ENCODE measurements at regions of chr12 and their contacts with region 1.

Region 1: GRCh38 chr12:122871851-122872780 is 23.8 kb downstream of the VPS37B start:
- DNase-seq: peak; percentile 99
- ATAC-seq: peak; percentile 74
- H3K4me3 Mint-ChIP-seq: 0 out of 2 replicates have a peak overlapping the region, but pooled peaks have one; percentile 26
- H3K27ac Mint-ChIP-seq: peak overlapping the region; percentile 64
- H3K4me1 Mint-ChIP-seq: peaks cover 36% of the 10 kb centered on the region
- H3K27me3 Mint-ChIP-seq: peaks cover 99% of the 10 kb centered on the region
- CTCF ChIP-seq: no peak

Region 2: GRCh38 chr12:122297494-122297893 is 574.6 kb before region 1 on chr12:
- CTCF ChIA-PET with region 1: no interaction called
- POLR2A ChIA-PET with region 1: no interaction called
- DNase-seq: no peak
- ATAC-seq: no peak
- H3K4me3 Mint-ChIP-seq: no peak overlapping the region
- H3K27ac Mint-ChIP-seq: no peak overlapping the region
- H3K4me1 Mint-ChIP-seq: no peaks in the 10 kb centered on the region
- H3K27me3 Mint-ChIP-seq: no peaks in the 10 kb centered on the region
- CTCF ChIP-seq: no peak

Region 3: GRCh38 chr12:122891661-122892525 is 19.8 kb after region 1 on chr12:
- CTCF ChIA-PET with region 1: interaction called, 12 read pairs
- POLR2A ChIA-PET with region 1: interaction called, 3 read pairs
- DNase-seq: no peak
- ATAC-seq: peak; percentile 57
- H3K4me3 Mint-ChIP-seq: peak overlapping the region; percentile 34
- H3K27ac Mint-ChIP-seq: peak overlapping the region; percentile 82
- H3K4me1 Mint-ChIP-seq: peaks cover 72% of the 10 kb centered on the region
- H3K27me3 Mint-ChIP-seq: peaks cover 74% of the 10 kb centered on the region
- CTCF ChIP-seq: no peak

Region 4: DNA sequence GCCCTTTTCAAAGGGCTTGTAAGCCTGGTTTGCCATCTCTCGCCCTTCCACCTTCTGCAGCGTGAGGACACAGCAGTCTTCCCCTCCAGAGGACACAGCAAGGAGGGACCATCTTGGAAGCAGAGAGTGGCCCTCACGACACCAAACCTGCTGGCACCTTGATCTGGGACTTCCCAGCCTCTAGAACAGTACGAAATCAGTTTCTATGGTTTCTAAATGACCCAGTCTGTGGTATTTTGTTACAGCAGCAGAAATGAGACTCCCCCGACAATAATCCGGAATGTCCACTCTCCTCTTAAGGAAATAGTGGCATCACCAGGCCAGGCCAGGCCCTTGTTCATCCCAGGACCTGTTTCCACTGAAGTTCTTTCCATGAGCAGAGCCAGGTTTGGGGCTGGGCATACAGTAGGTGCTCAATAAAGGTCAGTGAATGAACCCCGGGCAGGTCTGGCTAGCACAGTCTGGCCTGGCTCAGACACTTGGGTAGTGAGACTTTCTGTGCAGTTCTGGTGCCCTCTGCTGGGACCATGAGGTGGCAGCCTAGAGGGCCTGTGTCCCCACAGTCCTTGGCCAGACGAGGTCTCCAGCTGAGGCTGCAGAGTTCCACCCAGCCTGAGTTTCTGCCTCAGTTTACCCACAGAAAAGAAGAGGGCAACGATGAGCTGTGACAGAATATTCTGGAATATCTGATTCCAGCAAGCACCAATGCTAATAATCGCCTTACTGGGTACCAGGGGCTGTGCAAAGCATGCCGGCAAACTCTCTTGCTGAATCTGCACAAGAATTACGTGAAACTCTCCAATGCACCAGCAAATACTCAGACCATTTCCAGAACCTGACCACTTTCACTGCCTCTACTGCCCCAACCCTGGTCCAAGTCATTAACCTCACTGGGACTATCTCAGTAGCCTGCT is 80.1 kb after region 1 on chr12:
- CTCF ChIA-PET with region 1: interaction called, 25 read pairs
- POLR2A ChIA-PET with region 1: no interaction called
- DNase-seq: peak; percentile 75
- ATAC-seq: peak; percentile 97
- H3K4me3 Mint-ChIP-seq: no peak overlapping the region
- H3K27ac Mint-ChIP-seq: no peak overlapping the region
- H3K4me1 Mint-ChIP-seq: no peaks in the 10 kb centered on the region
- H3K27me3 Mint-ChIP-seq: no peaks in the 10 kb centered on the region
- CTCF ChIP-seq: peak; percentile 37; the same call in 1 of the 2 replicates

Region 5: GRCh38 chr12:122965851-122966722 is 94.0 kb after region 1 on chr12 and contains the start of gene ABCB9:
- CTCF ChIA-PET with region 1: interaction called, 13 read pairs
- POLR2A ChIA-PET with region 1: no interaction called
- DNase-seq: peak; percentile 98
- ATAC-seq: peak; percentile 93
- H3K4me3 Mint-ChIP-seq: peak within 1 kb of the TSS; percentile 63
- H3K27ac Mint-ChIP-seq: peak within 1 kb of the TSS; percentile 82
- H3K4me1 Mint-ChIP-seq: peaks cover 19% of the 10 kb centered on the region
- H3K27me3 Mint-ChIP-seq: peaks cover 5% of the 10 kb centered on the region
- CTCF ChIP-seq: no peak
- total RNA-seq, gene ABCB9: 4.8 to 6.3 TPM (median 5.8 TPM) in 3 replicates

Measured in WTC11 (cell line).